ENCODE measurements at regions of chr4 and their contacts with region 1.

Region 1: GRCh38 chr4:56215901-56216300 is 171.4 kb downstream of the AASDH start:
- DNase-seq: peak; percentile 58
- H3K4me3 Mint-ChIP-seq: peak overlapping the region; percentile 50
- H3K27ac Mint-ChIP-seq: peak overlapping the region; percentile 21
- H3K4me1 Mint-ChIP-seq: peaks cover 29% of the 10 kb centered on the region
- H3K27me3 Mint-ChIP-seq: no peaks in the 10 kb centered on the region
- CTCF ChIP-seq: no peak

Region 2: DNA sequence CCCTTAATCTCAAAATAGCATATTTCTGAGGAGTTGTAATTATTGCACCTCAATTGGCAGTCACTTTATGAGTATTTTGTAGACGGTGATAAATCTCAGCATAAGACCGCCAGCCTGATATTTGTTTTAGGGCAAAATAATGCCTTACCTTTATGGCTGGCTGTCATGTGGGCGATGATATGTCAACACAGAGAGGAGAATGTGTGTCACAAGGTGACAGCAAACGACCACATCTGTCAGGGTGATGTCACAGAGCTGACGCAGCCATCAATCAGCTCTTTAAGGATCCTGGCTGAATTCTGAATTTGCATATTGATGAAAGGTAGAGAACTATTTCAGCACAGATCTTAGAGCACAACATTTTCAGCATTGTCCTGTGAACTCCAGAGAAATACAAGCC is 57.4 kb before region 1 on chr4:
- CTCF ChIA-PET with region 1: no interaction called
- intact Hi-C with region 1: no loop called
- DNase-seq: no peak
- H3K4me3 Mint-ChIP-seq: no peak overlapping the region
- H3K27ac Mint-ChIP-seq: no peak overlapping the region
- H3K4me1 Mint-ChIP-seq: no peaks in the 10 kb centered on the region
- H3K27me3 Mint-ChIP-seq: no peaks in the 10 kb centered on the region
- CTCF ChIP-seq: no peak

Region 3: GRCh38 chr4:56240554-56241174 is 24.8 kb after region 1 on chr4:
- CTCF ChIA-PET with region 1: interaction called, 3 read pairs
- intact Hi-C with region 1: loop called (anchors 2 kb)
- DNase-seq: no peak
- H3K4me3 Mint-ChIP-seq: peak overlapping the region; percentile 24
- H3K27ac Mint-ChIP-seq: peak overlapping the region; percentile 33
- H3K4me1 Mint-ChIP-seq: peaks cover 36% of the 10 kb centered on the region
- H3K27me3 Mint-ChIP-seq: no peaks in the 10 kb centered on the region
- CTCF ChIP-seq: no peak

Region 4: DNA sequence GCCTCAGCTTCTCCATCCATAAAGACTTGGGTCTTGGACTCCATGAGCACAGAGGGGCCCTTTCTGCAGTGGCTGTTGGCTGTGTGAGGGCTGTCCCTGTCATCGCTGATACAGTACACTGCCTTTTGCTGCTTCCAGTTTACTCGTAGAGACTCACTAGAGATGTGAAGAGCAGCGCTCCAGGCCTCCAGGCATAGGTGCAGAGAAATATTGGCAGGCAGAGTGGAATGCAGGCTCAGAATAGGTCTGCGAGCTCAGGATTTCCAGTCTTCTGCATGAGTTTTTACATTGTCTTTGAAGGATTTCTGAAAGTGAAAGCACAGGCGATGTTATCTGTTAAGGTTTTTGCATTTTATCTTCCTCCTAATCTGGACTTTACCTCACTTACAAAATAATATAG is 74.0 kb after region 1 on chr4:
- CTCF ChIA-PET with region 1: no interaction called
- intact Hi-C with region 1: loop called (anchors 5 kb)
- DNase-seq: peak; percentile 5
- H3K4me3 Mint-ChIP-seq: peak overlapping the region; percentile 62
- H3K27ac Mint-ChIP-seq: no peak overlapping the region
- H3K4me1 Mint-ChIP-seq: peaks cover 20% of the 10 kb centered on the region
- H3K27me3 Mint-ChIP-seq: no peaks in the 10 kb centered on the region
- CTCF ChIP-seq: no peak

Region 5: GRCh38 chr4:56348576-56348975 is 132.7 kb after region 1 on chr4:
- CTCF ChIA-PET with region 1: no interaction called
- intact Hi-C with region 1: no loop called
- DNase-seq: no peak
- H3K4me3 Mint-ChIP-seq: no peak overlapping the region
- H3K27ac Mint-ChIP-seq: no peak overlapping the region
- H3K4me1 Mint-ChIP-seq: no peaks in the 10 kb centered on the region
- H3K27me3 Mint-ChIP-seq: no peaks in the 10 kb centered on the region
- CTCF ChIP-seq: no peak

Region 6: GRCh38 chr4:56512166-56512565 is 296.3 kb after region 1 on chr4:
- CTCF ChIA-PET with region 1: no interaction called
- intact Hi-C with region 1: no loop called
- DNase-seq: no peak
- H3K4me3 Mint-ChIP-seq: no peak overlapping the region
- H3K27ac Mint-ChIP-seq: no peak overlapping the region
- H3K4me1 Mint-ChIP-seq: no peaks in the 10 kb centered on the region
- H3K27me3 Mint-ChIP-seq: no peaks in the 10 kb centered on the region
- CTCF ChIP-seq: no peak